Mammary epithelial cell (primary cell): ENCODE measurements at regions of chr17 and their contacts with region 1.

Region 1: GRCh38 chr17:9628509-9628908 is 16.8 kb upstream of the USP43 start:
- DNase-seq: peak; percentile 47
- H3K4me3 ChIP-seq: no peak overlapping the region
- H3K27ac ChIP-seq: no peak overlapping the region
- H3K4me1 ChIP-seq: no peaks in the 10 kb centered on the region
- H3K27me3 ChIP-seq: no peaks in the 10 kb centered on the region
- CTCF ChIP-seq: peak in 1 of 2 donors; percentile 50

Region 2: GRCh38 chr17:9612006-9612405 is 16.5 kb before region 1 on chr17:
- CTCF ChIA-PET with region 1: no interaction called
- dilution Hi-C with region 1: no loop called
- in situ Hi-C with region 1: no loop called
- intact Hi-C with region 1: no loop called
- DNase-seq: peak; percentile 2
- H3K4me3 ChIP-seq: no peak overlapping the region
- H3K27ac ChIP-seq: no peak overlapping the region
- H3K4me1 ChIP-seq: no peaks in the 10 kb centered on the region
- H3K27me3 ChIP-seq: no peaks in the 10 kb centered on the region
- CTCF ChIP-seq: no peak

Region 3: DNA sequence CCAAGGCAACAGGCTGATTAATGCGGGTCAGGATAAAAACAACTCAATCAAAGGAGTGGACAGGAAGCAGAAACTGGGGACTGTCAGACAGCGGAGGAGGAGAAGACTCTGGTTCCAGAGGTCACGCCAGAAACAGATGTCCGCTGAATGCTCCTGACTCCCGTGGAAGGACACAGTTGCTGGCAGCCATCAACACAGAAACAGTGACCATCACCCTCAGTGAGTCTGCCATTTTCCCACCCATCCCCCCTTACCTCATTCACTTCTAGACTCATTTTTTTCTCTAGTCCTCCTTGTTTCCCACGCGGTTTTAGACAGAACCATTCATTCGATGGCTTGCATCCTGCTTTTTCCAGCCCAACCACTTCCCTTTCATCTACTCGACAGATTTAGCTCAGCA is 122.0 kb after region 1 on chr17:
- CTCF ChIA-PET with region 1: no interaction called
- dilution Hi-C with region 1: no loop called
- in situ Hi-C with region 1: no loop called
- intact Hi-C with region 1: loop called (anchors 1 kb)
- DNase-seq: no peak
- H3K4me3 ChIP-seq: no peak overlapping the region
- H3K27ac ChIP-seq: no peak overlapping the region
- H3K4me1 ChIP-seq: no peaks in the 10 kb centered on the region
- H3K27me3 ChIP-seq: no peaks in the 10 kb centered on the region
- CTCF ChIP-seq: no peak

Region 4: GRCh38 chr17:9768381-9768934 is 139.9 kb after region 1 on chr17:
- CTCF ChIA-PET with region 1: no interaction called
- dilution Hi-C with region 1: no loop called
- in situ Hi-C with region 1: no loop called
- intact Hi-C with region 1: loop called (anchors 1 kb)
- DNase-seq: peak; percentile 20
- H3K4me3 ChIP-seq: no peak overlapping the region
- H3K27ac ChIP-seq: no peak overlapping the region
- H3K4me1 ChIP-seq: no peaks in the 10 kb centered on the region
- H3K27me3 ChIP-seq: no peaks in the 10 kb centered on the region
- CTCF ChIP-seq: peak; percentile 36 to 45